ENCODE measurements at regions of chr5 and their contacts with region 1.

Region 1: GRCh38 chr5:11268891-11269290 is 507.9 kb upstream of the DAP start:
- DNase-seq: no peak
- H3K4me3 Mint-ChIP-seq: no peak overlapping the region
- H3K27ac Mint-ChIP-seq: no peak overlapping the region
- H3K4me1 Mint-ChIP-seq: no peaks in the 10 kb centered on the region
- H3K27me3 Mint-ChIP-seq: peaks cover 20% of the 10 kb centered on the region
- CTCF ChIP-seq: no peak

Region 2: GRCh38 chr5:11319836-11320580 is 51.1 kb after region 1 on chr5:
- CTCF ChIA-PET with region 1: interaction called, 13 read pairs
- POLR2A ChIA-PET with region 1: no interaction called
- intact Hi-C with region 1: no loop called
- DNase-seq: peak; percentile 77
- H3K4me3 Mint-ChIP-seq: no peak overlapping the region
- H3K27ac Mint-ChIP-seq: no peak overlapping the region
- H3K4me1 Mint-ChIP-seq: peaks cover 7% of the 10 kb centered on the region
- H3K27me3 Mint-ChIP-seq: no peaks in the 10 kb centered on the region
- CTCF ChIP-seq: no peak

Region 3: GRCh38 chr5:11494340-11494739 is 225.4 kb after region 1 on chr5:
- CTCF ChIA-PET with region 1: interaction called, 8 read pairs
- POLR2A ChIA-PET with region 1: no interaction called
- intact Hi-C with region 1: loop called (anchors 1 kb)
- DNase-seq: no peak
- H3K4me3 Mint-ChIP-seq: no peak overlapping the region
- H3K27ac Mint-ChIP-seq: no peak overlapping the region
- H3K4me1 Mint-ChIP-seq: no peaks in the 10 kb centered on the region
- H3K27me3 Mint-ChIP-seq: peaks cover 20% of the 10 kb centered on the region
- CTCF ChIP-seq: peak; percentile 46

Region 4: GRCh38 chr5:11719888-11720481 is 451.1 kb after region 1 on chr5:
- CTCF ChIA-PET with region 1: interaction called, 9 read pairs
- POLR2A ChIA-PET with region 1: no interaction called
- intact Hi-C with region 1: loop called (anchors 1 kb)
- DNase-seq: peak; percentile 77
- H3K4me3 Mint-ChIP-seq: no peak overlapping the region
- H3K27ac Mint-ChIP-seq: no peak overlapping the region
- H3K4me1 Mint-ChIP-seq: no peaks in the 10 kb centered on the region
- H3K27me3 Mint-ChIP-seq: no peaks in the 10 kb centered on the region
- CTCF ChIP-seq: peak; percentile 43

Region 5: DNA sequence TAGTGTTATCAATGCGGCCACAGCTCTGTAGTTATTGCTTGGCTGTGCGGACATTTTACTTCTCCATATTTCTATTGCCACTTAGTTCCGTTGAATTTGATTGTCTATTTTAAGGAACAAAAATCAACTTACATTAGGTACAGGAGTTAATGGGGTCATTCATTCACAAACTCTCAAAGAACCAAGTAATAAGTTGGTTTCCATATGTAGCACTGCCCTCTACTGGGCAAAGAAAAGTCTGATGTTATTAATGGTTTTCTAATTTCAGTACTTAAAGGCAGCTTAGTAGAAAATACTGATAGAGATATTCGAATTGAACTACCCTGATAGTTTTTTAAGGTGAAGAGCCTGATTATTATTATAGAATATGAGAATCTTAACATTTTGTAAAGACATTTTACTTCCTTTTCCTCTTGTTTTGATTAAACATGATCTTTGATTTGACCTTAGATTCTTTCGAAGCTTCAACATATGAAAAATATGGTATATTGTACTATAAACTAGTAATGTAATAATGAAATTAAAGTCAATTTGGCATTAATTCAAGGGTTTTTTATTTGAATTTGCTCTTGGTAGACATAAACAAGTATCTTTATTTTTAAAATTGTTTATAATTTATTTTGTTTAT is 754.8 kb after region 1 on chr5:
- CTCF ChIA-PET with region 1: interaction called, 30 read pairs
- POLR2A ChIA-PET with region 1: no interaction called
- intact Hi-C with region 1: loop called (anchors 2 kb)
- DNase-seq: peak; percentile 60
- H3K4me3 Mint-ChIP-seq: no peak overlapping the region
- H3K27ac Mint-ChIP-seq: no peak overlapping the region
- H3K4me1 Mint-ChIP-seq: no peaks in the 10 kb centered on the region
- H3K27me3 Mint-ChIP-seq: no peaks in the 10 kb centered on the region
- CTCF ChIP-seq: peak; percentile 44